ENCODE measurements at regions of chr5 and their contacts with region 1.

Region 1: GRCh38 chr5:42889311-42889933 is 77.7 kb upstream of the SELENOP start:
- DNase-seq: peak; percentile 83 to 94 (median 86)
- ATAC-seq: peak; percentile 96
- H3K4me3 ChIP-seq: no peak overlapping the region
- H3K27ac ChIP-seq: no peak overlapping the region
- H3K4me1 ChIP-seq: peaks cover 0 to 7% of the 10 kb centered on the region in 2 experiments; a peak in 2 of 5 replicates
- H3K27me3 ChIP-seq: no peaks in the 10 kb centered on the region; a peak in 1 of 5 replicates
- CTCF ChIP-seq: peak; percentile 92 to 98 (median 94)
- EP300 ChIP-seq: peak; percentile 56; the same call in 1 of the 2 replicates
- POLR2A ChIP-seq: no peak
- RAD21 ChIP-seq: peak; percentile 97 to 99

Region 2: GRCh38 chr5:42005561-42006153 is 883.8 kb before region 1 on chr5:
- CTCF ChIA-PET with region 1: interaction called, 3 read pairs
- POLR2A ChIA-PET with region 1: no interaction called
- in situ Hi-C with region 1: no loop called
- intact Hi-C with region 1: loop called (anchors 10 kb)
- DNase-seq: peak; percentile 20 to 53 (median 47)
- ATAC-seq: peak; percentile 81
- H3K4me3 ChIP-seq: no peak overlapping the region
- H3K27ac ChIP-seq: no peak overlapping the region
- H3K4me1 ChIP-seq: no peaks in the 10 kb centered on the region
- H3K27me3 ChIP-seq: no peaks in the 10 kb centered on the region; a peak in 1 of 5 replicates
- CTCF ChIP-seq: peak; percentile 35 to 70 (median 61); a peak in 5 of 6 replicates
- EP300 ChIP-seq: no peak
- POLR2A ChIP-seq: no peak
- RAD21 ChIP-seq: peak; percentile 10 to 45; a peak in 2 of 4 replicates

Region 3: GRCh38 chr5:42583322-42583721 is 306.1 kb before region 1 on chr5:
- CTCF ChIA-PET with region 1: interaction called, 5 read pairs
- POLR2A ChIA-PET with region 1: interaction called, 4 read pairs
- in situ Hi-C with region 1: loop called (anchors 25 kb)
- intact Hi-C with region 1: loop called (anchors 5 kb)
- DNase-seq: peak; percentile 69 to 88 (median 75)
- ATAC-seq: peak; percentile 77
- H3K4me3 ChIP-seq: no peak overlapping the region
- H3K27ac ChIP-seq: no peak overlapping the region
- H3K4me1 ChIP-seq: peaks cover 16 to 32% of the 10 kb centered on the region in 2 experiments
- H3K27me3 ChIP-seq: peaks cover 0 to 7% of the 10 kb centered on the region in 2 experiments; a peak in 3 of 5 replicates
- CTCF ChIP-seq: peak; percentile 83 to 94 (median 93)
- EP300 ChIP-seq: peak; percentile 48; the same call in 1 of the 2 replicates
- POLR2A ChIP-seq: no peak
- RAD21 ChIP-seq: peak; percentile 69 to 81

Region 4: GRCh38 chr5:42745426-42745825 is 144.0 kb before region 1 on chr5:
- CTCF ChIA-PET with region 1: no interaction called
- POLR2A ChIA-PET with region 1: interaction called, 3 read pairs
- in situ Hi-C with region 1: no loop called
- intact Hi-C with region 1: loop called (anchors 2 kb)
- DNase-seq: peak in 3 of 4 experiments; percentile 23 to 59 (median 26)
- ATAC-seq: peak; percentile 77
- H3K4me3 ChIP-seq: no peak overlapping the region
- H3K27ac ChIP-seq: no peak overlapping the region
- H3K4me1 ChIP-seq: no peaks in the 10 kb centered on the region
- H3K27me3 ChIP-seq: no peaks in the 10 kb centered on the region
- CTCF ChIP-seq: peak; percentile 56 to 64 (median 62)
- EP300 ChIP-seq: no peak
- POLR2A ChIP-seq: no peak
- RAD21 ChIP-seq: peak in 1 of 2 experiments; percentile 55; a peak in 2 of 4 replicates

Region 5: DNA sequence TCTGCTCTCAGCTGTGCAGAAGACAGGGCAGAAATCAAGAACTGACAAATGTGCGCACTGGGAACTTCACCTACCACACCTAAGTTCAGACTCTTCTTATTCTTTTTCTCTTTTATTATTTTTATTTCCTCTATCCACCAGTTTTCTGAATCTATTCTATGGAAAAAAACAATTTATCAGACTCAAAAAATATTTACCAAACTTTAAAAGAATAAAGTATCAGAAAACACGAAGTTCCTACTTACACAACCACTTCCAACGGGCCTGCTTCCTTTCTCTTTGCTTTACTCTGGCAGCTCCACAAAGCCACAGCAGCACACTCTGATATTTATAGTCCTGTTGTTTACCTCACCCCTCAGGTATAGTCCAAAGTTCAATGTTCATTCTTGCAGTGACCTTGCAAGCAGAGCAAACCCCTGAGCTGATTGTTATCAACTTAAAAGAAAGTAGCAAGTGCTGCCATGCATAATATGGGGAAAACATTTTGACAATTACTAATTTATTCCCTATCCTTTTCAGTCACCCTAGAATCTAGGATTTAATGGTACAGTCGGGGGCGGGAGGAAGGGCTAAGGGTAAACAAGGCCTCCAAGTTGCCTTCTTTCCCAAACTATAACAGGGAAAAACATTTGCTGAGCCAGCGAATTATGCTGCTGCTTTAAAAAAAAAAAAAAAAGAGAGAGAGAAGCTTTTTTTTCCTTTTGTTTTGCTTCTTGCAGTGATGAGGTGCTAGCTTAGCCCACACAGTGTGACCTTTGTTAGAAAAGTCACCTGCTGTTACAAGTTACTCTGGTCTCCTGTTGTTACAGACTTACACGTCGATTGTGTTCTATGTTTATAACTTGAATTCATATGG is 77.6 kb before region 1 on chr5 and contains the start of gene SELENOP:
- CTCF ChIA-PET with region 1: no interaction called
- POLR2A ChIA-PET with region 1: no interaction called
- in situ Hi-C with region 1: no loop called
- intact Hi-C with region 1: loop called (anchors 5 kb)
- DNase-seq: peak in 2 of 4 experiments; percentile 17 to 53
- ATAC-seq: peak; percentile 88
- H3K4me3 ChIP-seq: no peak within 1 kb of the TSS
- H3K27ac ChIP-seq: peak within 1 kb of the TSS; percentile 57
- H3K4me1 ChIP-seq: no peaks in the 10 kb centered on the region; a peak in 2 of 5 replicates
- H3K27me3 ChIP-seq: no peaks in the 10 kb centered on the region
- CTCF ChIP-seq: no peak
- EP300 ChIP-seq: no peak
- POLR2A ChIP-seq: peak; percentile 66
- RAD21 ChIP-seq: no peak
- polyA plus RNA-seq, gene SELENOP: 4.4 to 5.8 TPM

Region 6: DNA sequence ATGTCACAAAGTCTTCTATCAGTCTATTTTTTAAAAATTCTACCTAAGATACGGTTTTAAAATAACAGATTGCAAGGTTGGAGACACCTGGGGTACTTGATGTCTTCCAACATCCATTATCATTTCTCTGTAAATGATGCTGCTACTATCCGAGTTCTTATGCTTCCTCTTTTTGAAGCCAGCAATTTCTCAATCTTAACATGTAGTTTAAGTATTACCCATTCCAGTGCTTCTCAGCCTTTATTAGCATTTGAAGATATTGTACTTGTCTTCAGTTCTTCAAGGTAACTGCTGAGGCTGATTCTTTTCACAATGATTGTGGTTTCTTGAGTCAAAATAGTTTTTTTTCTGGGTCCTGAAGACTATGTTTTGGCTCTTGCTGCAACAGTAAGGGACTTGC is 18.7 kb after region 1 on chr5:
- CTCF ChIA-PET with region 1: no interaction called
- POLR2A ChIA-PET with region 1: no interaction called
- in situ Hi-C with region 1: no loop called
- intact Hi-C with region 1: no loop called
- DNase-seq: no peak
- ATAC-seq: no peak
- H3K4me3 ChIP-seq: no peak overlapping the region
- H3K27ac ChIP-seq: no peak overlapping the region
- H3K4me1 ChIP-seq: peaks cover 3 to 6% of the 10 kb centered on the region in 2 experiments; a peak in 2 of 5 replicates
- H3K27me3 ChIP-seq: peaks cover 3 to 11% of the 10 kb centered on the region in 2 experiments; a peak in 3 of 5 replicates
- CTCF ChIP-seq: no peak
- EP300 ChIP-seq: no peak
- POLR2A ChIP-seq: no peak
- RAD21 ChIP-seq: no peak

Region 7: GRCh38 chr5:42944989-42945388 is 55.6 kb after region 1 on chr5:
- CTCF ChIA-PET with region 1: no interaction called
- POLR2A ChIA-PET with region 1: no interaction called
- in situ Hi-C with region 1: no loop called
- intact Hi-C with region 1: no loop called
- DNase-seq: peak in 1 of 4 experiments; percentile 31
- ATAC-seq: peak; percentile 65
- H3K4me3 ChIP-seq: no peak overlapping the region
- H3K27ac ChIP-seq: no peak overlapping the region
- H3K4me1 ChIP-seq: no peaks in the 10 kb centered on the region
- H3K27me3 ChIP-seq: no peaks in the 10 kb centered on the region
- CTCF ChIP-seq: no peak
- EP300 ChIP-seq: no peak
- POLR2A ChIP-seq: no peak
- RAD21 ChIP-seq: no peak

Measured in K562 (cell line).